Activated B cell treated with CpG ODN at 0.5 μM for 24 hours (primary cell): ENCODE measurements at regions of chr9 and their contacts with region 1.

Region 1: DNA sequence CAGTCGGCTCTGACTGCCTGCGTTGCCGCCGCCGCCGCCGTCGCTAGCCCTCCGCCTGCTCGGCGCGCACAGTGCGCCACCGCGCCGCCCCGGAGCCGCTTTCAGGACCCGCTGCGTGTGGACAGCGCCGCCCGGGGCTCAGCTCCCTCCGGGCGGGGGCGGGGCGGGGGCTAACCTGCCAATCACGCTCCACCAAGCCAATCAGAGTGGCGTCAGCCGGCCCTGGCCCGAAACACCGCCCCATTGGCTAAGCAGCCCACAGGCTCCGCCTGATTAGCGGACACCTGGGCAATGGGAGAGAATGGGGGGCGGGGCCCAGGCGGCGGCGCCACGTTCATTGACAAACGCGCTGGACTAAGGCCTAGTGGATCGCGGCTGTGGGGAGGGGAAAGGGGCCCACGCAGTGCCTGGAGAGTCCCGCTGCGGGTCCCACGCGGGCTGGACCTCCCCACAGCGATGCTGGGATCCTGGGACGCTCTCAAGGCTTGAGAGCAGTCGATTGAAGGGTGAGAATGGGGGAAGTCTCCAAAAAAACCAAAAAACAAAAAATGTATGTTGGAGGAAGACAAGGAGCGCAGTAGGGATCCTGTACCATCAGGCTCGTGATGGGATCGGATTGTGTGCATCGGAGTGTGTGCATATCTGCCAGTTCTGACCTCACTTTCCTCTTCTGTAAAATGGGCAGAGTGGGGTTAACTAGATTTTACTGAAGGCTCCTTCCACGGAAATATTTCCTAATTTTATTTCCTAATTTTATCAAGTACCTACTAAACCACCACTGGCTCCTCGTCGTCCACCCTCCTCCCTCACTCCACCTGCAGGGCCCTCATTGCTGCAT is 6.3 kb downstream of the PAX5 start:
- DNase-seq: peak; percentile 95
- ATAC-seq: peak; percentile 85
- H3K4me3 Mint-ChIP-seq: peak overlapping the region; percentile 90
- H3K27ac Mint-ChIP-seq: peak overlapping the region; percentile 96
- H3K4me1 Mint-ChIP-seq: peaks cover 77% of the 10 kb centered on the region
- H3K27me3 Mint-ChIP-seq: no peaks in the 10 kb centered on the region
- CTCF ChIP-seq: no peak

Region 2: GRCh38 chr9:36873247-36873875 is 154.4 kb before region 1 on chr9:
- CTCF ChIA-PET with region 1: interaction called, 6 read pairs
- POLR2A ChIA-PET with region 1: interaction called, 4 read pairs
- intact Hi-C with region 1: loop called (anchors 2 kb)
- DNase-seq: peak; percentile 52
- ATAC-seq: peak; percentile 77
- H3K4me3 Mint-ChIP-seq: no peak overlapping the region
- H3K27ac Mint-ChIP-seq: peak overlapping the region; percentile 87
- H3K4me1 Mint-ChIP-seq: peaks cover 63% of the 10 kb centered on the region
- H3K27me3 Mint-ChIP-seq: no peaks in the 10 kb centered on the region
- CTCF ChIP-seq: no peak

Region 3: DNA sequence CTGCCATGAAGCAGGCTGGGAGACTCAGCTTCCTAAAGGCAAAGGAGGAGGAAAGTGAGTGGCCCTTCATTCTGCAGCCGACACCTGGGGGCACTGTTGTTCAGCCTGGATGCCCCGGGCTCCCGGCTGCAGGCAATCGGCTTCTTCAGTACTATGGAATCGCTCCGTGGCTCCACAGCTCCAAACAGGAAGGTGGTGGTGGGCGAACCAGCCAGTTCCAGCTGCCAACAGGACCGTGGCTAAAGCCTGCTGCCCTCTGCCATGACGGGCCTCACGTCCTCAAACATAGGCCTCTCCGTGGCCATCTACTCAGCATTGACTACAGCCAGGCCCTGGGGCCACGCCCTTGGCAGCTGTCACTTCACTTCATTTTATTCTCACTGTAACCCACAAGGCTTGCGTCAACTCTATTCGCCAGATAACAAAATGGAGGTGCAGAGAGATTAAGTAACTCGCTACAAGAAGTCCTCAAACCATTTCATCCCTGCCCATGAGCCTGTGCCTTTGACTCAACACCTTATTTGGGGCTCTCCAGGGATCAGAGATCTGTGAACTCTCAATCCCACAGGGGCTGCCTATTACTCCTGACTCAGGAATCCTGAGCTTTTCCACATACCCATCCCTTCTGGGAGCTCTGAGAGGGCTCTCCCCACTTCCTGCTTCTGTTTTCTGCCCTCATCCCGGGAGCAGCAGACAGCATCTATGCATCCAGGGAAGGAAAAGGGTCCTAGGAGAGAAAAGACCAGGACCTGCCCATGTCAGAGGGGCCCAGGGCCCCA is 31.7 kb before region 1 on chr9:
- CTCF ChIA-PET with region 1: interaction called, 9 read pairs
- POLR2A ChIA-PET with region 1: interaction called, 119 read pairs
- intact Hi-C with region 1: loop called (anchors 1 kb)
- DNase-seq: peak; percentile 56
- ATAC-seq: peak; percentile 29
- H3K4me3 Mint-ChIP-seq: peak overlapping the region; percentile 47
- H3K27ac Mint-ChIP-seq: peak overlapping the region; percentile 97
- H3K4me1 Mint-ChIP-seq: peaks cover 96% of the 10 kb centered on the region
- H3K27me3 Mint-ChIP-seq: no peaks in the 10 kb centered on the region
- CTCF ChIP-seq: no peak

Region 4: GRCh38 chr9:37017546-37017945 is 10.3 kb before region 1 on chr9:
- CTCF ChIA-PET with region 1: no interaction called
- POLR2A ChIA-PET with region 1: interaction called, 7 read pairs
- intact Hi-C with region 1: loop called (anchors 1 kb)
- DNase-seq: no peak
- ATAC-seq: no peak
- H3K4me3 Mint-ChIP-seq: no peak overlapping the region
- H3K27ac Mint-ChIP-seq: peak overlapping the region; percentile 65
- H3K4me1 Mint-ChIP-seq: peaks cover 90% of the 10 kb centered on the region
- H3K27me3 Mint-ChIP-seq: no peaks in the 10 kb centered on the region
- CTCF ChIP-seq: no peak

Region 5: DNA sequence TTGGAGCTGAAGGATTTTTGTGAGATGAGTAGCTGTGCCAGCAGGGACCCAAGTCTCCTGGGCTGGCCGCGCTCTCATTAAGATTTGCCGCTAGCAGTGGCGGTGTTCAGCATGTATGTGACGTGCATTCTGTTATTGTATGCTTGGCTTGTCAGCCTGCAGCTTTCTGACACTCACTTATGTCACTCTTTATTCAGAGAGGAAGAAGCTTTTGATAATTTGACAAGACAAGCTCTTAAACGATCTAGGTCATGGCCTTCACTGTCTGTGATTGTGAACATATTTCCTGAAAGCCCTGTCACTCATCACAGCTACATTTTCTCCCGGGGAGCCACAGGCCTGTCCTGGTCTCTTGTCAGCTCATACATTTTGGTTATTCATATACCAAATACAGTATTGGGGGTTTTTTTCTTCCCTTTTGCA is 296.5 kb after region 1 on chr9:
- CTCF ChIA-PET with region 1: interaction called, 15 read pairs
- POLR2A ChIA-PET with region 1: interaction called, 26 read pairs
- intact Hi-C with region 1: no loop called
- DNase-seq: peak; percentile 42
- ATAC-seq: peak; percentile 86
- H3K4me3 Mint-ChIP-seq: peak overlapping the region; percentile 59
- H3K27ac Mint-ChIP-seq: peak overlapping the region; percentile 99
- H3K4me1 Mint-ChIP-seq: peaks cover 69% of the 10 kb centered on the region
- H3K27me3 Mint-ChIP-seq: no peaks in the 10 kb centered on the region
- CTCF ChIP-seq: no peak

Region 6: DNA sequence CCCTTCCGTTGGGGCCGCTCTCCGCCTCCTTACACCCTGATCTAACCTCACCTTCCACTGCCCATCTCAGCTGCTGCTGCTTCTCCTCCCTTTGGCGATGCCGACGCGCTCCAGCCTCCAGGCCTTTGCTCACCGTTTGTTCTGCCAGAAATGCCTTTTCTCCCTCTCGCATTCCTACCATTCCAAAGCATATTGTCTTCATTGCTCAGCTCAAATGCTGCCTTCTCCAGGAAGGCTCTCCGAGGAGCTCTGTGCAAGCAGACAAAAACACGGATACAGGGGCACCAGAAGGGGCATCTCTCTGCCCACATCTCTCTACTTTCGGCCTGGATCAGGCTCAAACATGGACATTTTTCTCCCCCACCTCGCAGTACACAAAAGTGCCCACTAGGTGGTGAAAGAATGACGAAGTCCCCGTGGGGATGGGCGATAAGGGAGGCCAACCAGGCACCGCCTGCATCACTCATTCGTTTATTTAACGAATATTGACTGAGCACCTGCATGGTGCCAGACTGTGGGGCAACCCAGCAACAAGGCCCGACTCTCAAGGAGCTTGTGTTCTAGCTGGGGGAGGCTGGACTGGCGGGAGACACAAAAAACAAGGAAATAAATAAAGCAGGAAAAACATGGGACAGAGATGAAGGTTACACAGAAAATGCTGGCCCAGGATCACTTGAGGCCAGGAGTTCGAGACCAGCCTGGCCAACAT is 387.4 kb after region 1 on chr9:
- CTCF ChIA-PET with region 1: interaction called, 3 read pairs
- POLR2A ChIA-PET with region 1: interaction called, 14 read pairs
- intact Hi-C with region 1: no loop called
- DNase-seq: peak; percentile 55
- ATAC-seq: peak; percentile 77
- H3K4me3 Mint-ChIP-seq: peak overlapping the region; percentile 69
- H3K27ac Mint-ChIP-seq: peak overlapping the region; percentile 85
- H3K4me1 Mint-ChIP-seq: peaks cover 63% of the 10 kb centered on the region
- H3K27me3 Mint-ChIP-seq: no peaks in the 10 kb centered on the region
- CTCF ChIP-seq: peak; percentile 64

Region 7: DNA sequence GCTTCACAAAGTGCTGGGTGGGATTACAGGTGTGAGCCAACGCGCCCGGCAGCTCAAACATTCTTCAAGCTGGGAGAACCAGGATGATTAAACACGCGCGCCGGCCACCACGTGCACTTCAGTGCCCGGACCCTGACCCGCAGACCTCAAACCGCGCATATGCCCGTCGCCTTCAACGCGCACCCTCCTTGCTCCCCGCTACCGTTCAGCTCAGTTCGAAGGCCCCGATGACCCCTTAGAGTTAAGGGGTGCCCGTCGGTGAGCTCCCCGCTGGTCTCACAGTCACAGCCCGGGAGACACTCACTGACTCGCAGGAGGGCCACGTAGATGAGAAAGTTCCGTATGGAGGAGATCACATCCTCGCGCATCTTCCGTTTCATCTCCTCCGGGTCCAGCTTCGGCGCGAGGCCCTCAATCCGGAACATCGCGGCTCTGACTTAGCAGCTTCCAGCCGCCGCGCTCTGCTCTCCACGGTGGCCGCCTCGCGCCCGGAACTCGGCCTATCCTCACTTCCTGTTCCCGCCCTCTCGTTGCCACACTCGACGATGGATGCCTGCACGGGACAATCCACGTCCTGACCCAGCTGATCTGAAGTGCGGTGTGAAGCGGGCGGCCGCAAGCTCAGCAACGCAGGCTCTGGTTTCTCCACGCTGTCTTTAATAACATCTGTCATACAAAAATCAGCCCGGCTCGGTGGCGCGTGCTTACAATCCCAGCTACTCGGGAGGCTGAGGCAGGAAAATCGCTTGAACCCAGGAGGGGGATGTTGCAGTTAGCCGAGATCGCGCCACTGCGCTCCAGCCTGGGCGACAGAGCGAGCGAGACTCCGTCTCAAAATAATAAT is 564.5 kb after region 1 on chr9 and contains the start of gene TOMM5:
- CTCF ChIA-PET with region 1: no interaction called
- POLR2A ChIA-PET with region 1: interaction called, 11 read pairs
- intact Hi-C with region 1: no loop called
- DNase-seq: peak; percentile 82
- ATAC-seq: peak; percentile 94
- H3K4me3 Mint-ChIP-seq: peak within 1 kb of the TSS; percentile 99
- H3K27ac Mint-ChIP-seq: peak within 1 kb of the TSS; percentile 96
- H3K4me1 Mint-ChIP-seq: peaks cover 47% of the 10 kb centered on the region
- H3K27me3 Mint-ChIP-seq: peaks cover 5% of the 10 kb centered on the region
- CTCF ChIP-seq: no peak
- total RNA-seq, gene TOMM5: 77.8 and 80.3 TPM in 2 replicates